Activated CD4-positive, alpha-beta memory T cell treated with anti-CD3 and anti-CD28 coated beads, Interleukin-2, amount 10 ng/mL, durations not matched to agents 7 days and 5 days (primary cell): ENCODE measurements at regions of chr17 and their contacts with region 1.

Region 1: GRCh38 chr17:74790161-74791054 is 14.3 kb upstream of the NAT9 start:
- DNase-seq: no peak
- H3K4me3 Mint-ChIP-seq: no peak overlapping the region
- H3K27ac Mint-ChIP-seq: peak overlapping the region; percentile 41
- H3K4me1 Mint-ChIP-seq: peaks cover 40% of the 10 kb centered on the region
- H3K27me3 Mint-ChIP-seq: no peaks in the 10 kb centered on the region

Region 2: DNA sequence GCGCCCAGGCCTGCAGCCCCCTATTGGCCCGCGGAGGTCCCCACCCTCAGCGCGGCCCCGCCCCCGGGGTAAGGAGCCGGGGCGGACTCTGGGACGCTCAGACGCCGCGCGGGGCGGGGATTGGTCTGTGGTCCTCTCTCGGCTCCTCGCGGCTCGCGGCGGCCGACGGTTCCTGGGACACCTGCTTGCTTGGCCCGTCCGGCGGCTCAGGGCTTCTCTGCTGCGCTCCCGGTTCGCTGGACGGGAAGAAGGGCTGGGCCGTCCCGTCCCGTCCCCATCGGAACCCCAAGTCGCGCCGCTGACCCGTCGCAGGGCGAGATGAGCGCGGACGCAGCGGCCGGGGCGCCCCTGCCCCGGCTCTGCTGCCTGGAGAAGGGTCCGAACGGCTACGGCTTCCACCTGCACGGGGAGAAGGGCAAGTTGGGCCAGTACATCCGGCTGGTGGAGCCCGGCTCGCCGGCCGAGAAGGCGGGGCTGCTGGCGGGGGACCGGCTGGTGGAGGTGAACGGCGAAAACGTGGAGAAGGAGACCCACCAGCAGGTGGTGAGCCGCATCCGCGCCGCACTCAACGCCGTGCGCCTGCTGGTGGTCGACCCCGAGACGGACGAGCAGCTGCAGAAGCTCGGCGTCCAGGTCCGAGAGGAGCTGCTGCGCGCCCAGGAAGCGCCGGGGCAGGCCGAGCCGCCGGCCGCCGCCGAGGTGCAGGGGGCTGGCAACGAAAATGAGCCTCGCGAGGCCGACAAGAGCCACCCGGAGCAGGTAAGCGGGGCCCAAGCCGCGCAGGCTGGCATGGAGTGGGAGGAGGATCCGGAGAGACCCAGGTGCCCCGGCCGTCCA is 41.7 kb before region 1 on chr17 and contains the start of gene NHERF1:
- CTCF ChIA-PET with region 1: interaction called, 30 read pairs
- POLR2A ChIA-PET with region 1: interaction called, 8 read pairs
- DNase-seq: peak; percentile 96
- H3K4me3 Mint-ChIP-seq: peak within 1 kb of the TSS; percentile 94
- H3K27ac Mint-ChIP-seq: peak within 1 kb of the TSS; percentile 85
- H3K4me1 Mint-ChIP-seq: peaks cover 61% of the 10 kb centered on the region
- H3K27me3 Mint-ChIP-seq: no peaks in the 10 kb centered on the region
- total RNA-seq, gene NHERF1: 320 to 328 TPM

Region 3: GRCh38 chr17:74770498-74771318 is 19.7 kb before region 1 on chr17:
- CTCF ChIA-PET with region 1: interaction called, 30 read pairs
- POLR2A ChIA-PET with region 1: interaction called, 7 read pairs
- DNase-seq: peak; percentile 78
- H3K4me3 Mint-ChIP-seq: no peak overlapping the region
- H3K27ac Mint-ChIP-seq: peak overlapping the region; percentile 48
- H3K4me1 Mint-ChIP-seq: peaks cover 42% of the 10 kb centered on the region
- H3K27me3 Mint-ChIP-seq: no peaks in the 10 kb centered on the region

Region 4: DNA sequence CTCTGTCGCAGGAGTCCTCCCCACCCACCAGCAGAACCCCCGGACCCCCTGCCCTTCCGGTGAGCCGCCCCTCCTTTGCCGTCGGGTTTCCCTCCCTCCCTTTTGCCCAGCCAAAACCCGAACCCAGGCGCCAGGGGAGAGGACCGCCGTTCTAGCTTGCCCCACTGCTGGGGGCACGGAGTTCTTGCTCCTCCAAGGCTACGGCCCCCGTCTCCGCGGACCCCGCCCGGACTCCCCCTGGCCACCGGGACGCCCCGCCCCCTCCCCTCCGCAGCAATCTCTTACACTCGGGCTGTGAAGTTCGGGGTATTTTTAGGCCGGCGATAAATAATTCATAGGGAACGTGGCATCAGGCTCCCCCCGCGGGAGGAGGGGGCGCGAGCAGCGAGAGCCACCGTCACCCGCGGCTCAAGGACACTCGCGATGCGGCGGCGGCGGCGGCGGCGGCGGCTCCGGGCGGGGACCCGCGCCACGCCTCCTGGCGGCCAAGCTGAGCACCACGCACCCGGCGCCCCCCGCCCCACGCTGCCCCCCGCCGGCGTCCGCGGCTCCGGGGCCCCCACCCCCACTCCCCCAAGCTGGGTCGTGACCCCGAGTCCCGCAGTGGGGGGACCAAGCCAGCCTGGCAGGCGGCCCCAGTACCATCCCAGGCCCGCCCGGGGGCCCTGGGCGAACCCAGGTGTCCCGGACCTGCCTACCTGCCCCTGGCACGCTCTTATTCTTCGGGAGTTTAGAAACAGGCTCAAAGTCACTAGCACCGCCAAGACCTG is 69.2 kb after region 1 on chr17 and contains the start of gene GRIN2C:
- CTCF ChIA-PET with region 1: interaction called, 56 read pairs
- POLR2A ChIA-PET with region 1: interaction called, 7 read pairs
- DNase-seq: peak; percentile 33
- H3K4me3 Mint-ChIP-seq: no peak within 1 kb of the TSS
- H3K27ac Mint-ChIP-seq: no peak within 1 kb of the TSS
- H3K4me1 Mint-ChIP-seq: peaks cover 14% of the 10 kb centered on the region
- H3K27me3 Mint-ChIP-seq: peaks cover 60% of the 10 kb centered on the region
- total RNA-seq, gene GRIN2C: 0.45 TPM in 1 of 2 experiments, not detected in the other

Region 5: DNA sequence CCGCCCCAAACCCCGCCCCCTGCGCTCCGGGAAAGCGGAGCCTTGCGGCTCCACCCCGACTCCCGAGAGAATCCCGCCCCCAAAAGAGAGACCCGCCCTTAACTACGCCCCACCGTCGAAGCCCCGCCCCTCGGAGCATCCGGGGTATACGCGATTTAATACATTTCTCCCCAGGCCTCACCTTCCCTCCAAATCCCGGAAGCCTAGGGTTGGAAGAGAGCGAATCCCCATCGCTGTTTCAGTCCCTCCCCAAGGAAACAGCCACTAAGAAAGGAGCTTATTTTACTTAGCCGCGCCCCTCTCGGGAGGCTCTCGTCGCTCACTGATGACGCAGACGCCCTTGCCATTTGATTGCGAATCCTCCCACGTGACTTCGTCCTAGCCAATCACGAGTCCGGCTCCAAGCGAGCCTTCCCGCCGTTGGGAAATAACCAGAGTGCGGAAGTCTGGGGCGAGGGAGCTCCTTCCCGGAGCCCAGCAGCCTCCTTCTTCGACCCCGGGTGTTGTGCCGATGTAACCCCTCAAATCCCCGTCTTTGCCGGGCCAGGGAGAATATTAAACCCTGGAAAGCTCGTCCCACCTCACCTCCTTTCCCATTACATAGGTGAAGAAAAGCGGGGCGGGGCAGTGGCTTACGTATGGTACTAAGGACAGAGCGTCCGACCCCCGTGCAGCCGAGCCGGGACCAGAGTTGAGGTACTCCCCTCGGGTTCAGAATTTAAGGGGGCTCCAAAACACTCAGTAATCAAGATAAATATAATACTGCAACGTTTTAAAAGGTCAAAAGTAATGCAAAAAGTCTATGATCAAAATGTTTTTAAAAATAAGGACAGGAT is 82.8 kb after region 1 on chr17:
- CTCF ChIA-PET with region 1: interaction called, 18 read pairs
- POLR2A ChIA-PET with region 1: interaction called, 14 read pairs
- DNase-seq: peak; percentile 100
- H3K4me3 Mint-ChIP-seq: peak overlapping the region; percentile 96
- H3K27ac Mint-ChIP-seq: peak overlapping the region; percentile 86
- H3K4me1 Mint-ChIP-seq: peaks cover 40% of the 10 kb centered on the region
- H3K27me3 Mint-ChIP-seq: no peaks in the 10 kb centered on the region